ENCODE measurements at regions of chrX and their contacts with region 1.

Region 1: DNA sequence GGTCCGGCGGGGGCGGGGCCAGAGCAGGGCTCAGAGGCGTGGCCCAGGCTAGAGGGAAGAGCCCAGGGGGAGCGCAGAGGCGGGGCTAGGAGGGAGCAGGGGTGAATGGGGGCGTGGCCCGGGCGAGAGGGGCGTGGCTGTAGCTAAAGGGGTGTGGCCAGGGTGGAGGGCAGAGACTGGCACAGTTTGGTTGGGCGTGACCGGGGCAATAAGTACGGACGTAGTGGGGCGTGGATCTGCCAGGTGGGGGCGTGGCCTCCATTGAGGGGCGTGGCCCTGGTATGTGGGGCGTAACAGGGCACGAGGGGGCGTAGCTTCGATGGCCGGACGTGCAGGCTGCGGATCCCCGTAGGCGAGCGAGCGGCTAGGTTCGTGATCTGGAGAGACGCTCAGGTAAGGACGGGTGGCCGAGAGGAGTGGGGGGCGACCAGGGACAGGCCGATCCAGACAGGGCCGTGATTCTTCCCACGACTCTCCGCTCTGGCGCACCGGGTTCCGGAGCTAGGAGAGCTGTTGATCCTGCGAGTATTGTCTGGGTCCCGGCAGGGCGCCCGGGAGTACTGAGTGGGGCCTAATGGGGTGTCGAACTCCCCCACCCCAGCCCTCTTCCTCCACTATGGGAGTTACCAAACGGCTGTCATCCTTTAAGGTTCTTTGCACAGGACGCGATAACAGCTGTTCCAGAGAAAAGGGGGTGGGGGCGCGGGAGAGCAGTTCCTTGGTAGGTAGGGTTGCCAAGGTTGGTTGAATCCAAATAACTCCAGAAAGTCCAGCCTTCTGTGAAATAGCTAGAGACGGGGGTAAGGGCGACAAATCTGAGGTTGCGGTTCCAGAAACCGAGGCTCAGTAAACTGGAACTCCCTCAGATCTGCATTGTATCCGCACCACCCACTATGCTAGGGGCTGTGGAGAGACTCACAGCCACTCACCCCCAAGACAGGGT is at the start of gene CA5B:
- DNase-seq: peak; percentile 95 to 100 (median 97)
- ATAC-seq: peak; percentile 93
- H3K4me3 ChIP-seq: peak within 1 kb of the TSS; percentile 91
- H3K4me3 Mint-ChIP-seq: peak within 1 kb of the TSS; percentile 100
- H3K27ac ChIP-seq: peak within 1 kb of the TSS; percentile 64 to 82
- H3K27ac Mint-ChIP-seq: peak within 1 kb of the TSS; percentile 92
- H3K4me1 ChIP-seq: peaks cover 28% of the 10 kb centered on the region
- H3K4me1 Mint-ChIP-seq: peaks cover 55% of the 10 kb centered on the region
- H3K27me3 ChIP-seq: no peaks in the 10 kb centered on the region
- H3K27me3 Mint-ChIP-seq: no peaks in the 10 kb centered on the region
- CTCF ChIP-seq: no peak
- total RNA-seq, gene CA5B: 60.8 to 64.5 TPM

Region 2: GRCh38 chrX:14872851-14873675 is 865.2 kb before region 1 on chrX and contains the starts of genes FANCB and MOSPD2:
- CTCF ChIA-PET with region 1: no interaction called
- POLR2A ChIA-PET with region 1: no interaction called
- intact Hi-C with region 1: loop called in 1 of 2 experiments (anchors 10 kb)
- DNase-seq: peak; percentile 82 to 97 (median 92)
- ATAC-seq: peak; percentile 89
- H3K4me3 ChIP-seq: peak within 1 kb of the TSS; percentile 85
- H3K4me3 Mint-ChIP-seq: peak within 1 kb of the TSS; percentile 93
- H3K27ac ChIP-seq: peak within 1 kb of the TSS; percentile 71 to 72
- H3K27ac Mint-ChIP-seq: peak within 1 kb of the TSS; percentile 91
- H3K4me1 ChIP-seq: peaks cover 7% of the 10 kb centered on the region
- H3K4me1 Mint-ChIP-seq: peaks cover 8% of the 10 kb centered on the region
- H3K27me3 ChIP-seq: no peaks in the 10 kb centered on the region
- H3K27me3 Mint-ChIP-seq: no peaks in the 10 kb centered on the region
- CTCF ChIP-seq: no peak
- total RNA-seq, gene FANCB: 1.5 to 1.6 TPM
- total RNA-seq, gene MOSPD2: 6.4 to 6.8 TPM

Region 3: GRCh38 chrX:15579778-15580747 is 158.2 kb before region 1 on chrX:
- CTCF ChIA-PET with region 1: no interaction called
- POLR2A ChIA-PET with region 1: no interaction called
- intact Hi-C with region 1: no loop called
- DNase-seq: no peak
- ATAC-seq: no peak
- H3K4me3 ChIP-seq: no peak overlapping the region
- H3K4me3 Mint-ChIP-seq: no peak overlapping the region
- H3K27ac ChIP-seq: no peak overlapping the region
- H3K27ac Mint-ChIP-seq: no peak overlapping the region
- H3K4me1 ChIP-seq: no peaks in the 10 kb centered on the region
- H3K4me1 Mint-ChIP-seq: no peaks in the 10 kb centered on the region
- H3K27me3 ChIP-seq: no peaks in the 10 kb centered on the region
- H3K27me3 Mint-ChIP-seq: no peaks in the 10 kb centered on the region
- CTCF ChIP-seq: no peak

Region 4: GRCh38 chrX:15749642-15750610 is 11.7 kb after region 1 on chrX:
- CTCF ChIA-PET with region 1: interaction called, 25 read pairs
- POLR2A ChIA-PET with region 1: interaction called, 204 read pairs
- intact Hi-C with region 1: loop called in 1 of 2 experiments (anchors 1 kb)
- DNase-seq: peak in 6 of 14 experiments; percentile 12 to 65 (median 60)
- ATAC-seq: peak; percentile 57
- H3K4me3 ChIP-seq: peak overlapping the region; percentile 19
- H3K4me3 Mint-ChIP-seq: peak overlapping the region; percentile 64
- H3K27ac ChIP-seq: peak overlapping the region; percentile 82 to 98
- H3K27ac Mint-ChIP-seq: peak overlapping the region; percentile 91
- H3K4me1 ChIP-seq: peaks cover 60% of the 10 kb centered on the region
- H3K4me1 Mint-ChIP-seq: peaks cover 86% of the 10 kb centered on the region
- H3K27me3 ChIP-seq: no peaks in the 10 kb centered on the region
- H3K27me3 Mint-ChIP-seq: no peaks in the 10 kb centered on the region
- CTCF ChIP-seq: no peak

Region 5: DNA sequence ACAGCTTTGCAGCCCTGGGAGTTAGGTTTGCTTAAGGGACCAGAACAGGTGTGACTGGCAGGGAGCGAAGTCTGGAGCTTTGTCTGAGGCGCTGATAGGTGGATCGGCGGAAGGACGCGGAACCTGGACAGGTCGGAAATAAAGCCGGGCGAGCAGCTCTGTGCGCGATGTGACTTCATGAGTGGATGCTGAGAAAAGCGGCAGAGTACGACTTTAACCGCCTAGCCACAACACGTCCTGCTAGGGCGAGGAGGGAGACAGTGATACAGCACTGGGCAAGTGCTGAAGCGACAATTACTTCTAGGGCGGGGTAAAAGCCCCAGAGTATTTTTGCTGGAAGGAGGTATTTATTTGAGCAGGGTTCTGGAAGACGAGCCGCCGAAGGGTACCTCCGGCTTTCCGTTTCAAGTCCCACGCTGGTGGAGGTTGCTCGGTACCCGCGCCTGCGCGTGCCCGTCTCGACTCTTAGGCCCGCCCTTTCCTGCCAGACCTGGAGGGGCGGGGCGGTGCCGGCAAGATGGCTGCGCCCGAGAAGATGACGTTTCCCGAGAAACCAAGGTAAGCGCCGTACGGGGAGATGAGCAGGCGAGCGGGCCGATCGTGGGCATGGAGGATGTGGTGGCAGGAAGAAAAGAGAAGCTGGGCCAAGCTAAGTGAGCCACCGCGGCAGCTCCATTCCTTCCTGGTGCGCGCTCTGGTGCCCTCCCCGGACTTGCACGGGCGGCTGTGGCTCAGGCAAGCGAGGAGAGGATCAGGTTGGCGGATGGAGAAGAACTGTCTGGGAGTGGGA is 51.9 kb after region 1 on chrX and contains the start of gene ZRSR2:
- CTCF ChIA-PET with region 1: interaction called, 4 read pairs
- POLR2A ChIA-PET with region 1: interaction called, 38 read pairs
- intact Hi-C with region 1: no loop called
- DNase-seq: peak; percentile 72 to 94 (median 86)
- ATAC-seq: peak; percentile 90
- H3K4me3 ChIP-seq: peak within 1 kb of the TSS; percentile 86
- H3K4me3 Mint-ChIP-seq: no peak within 1 kb of the TSS
- H3K27ac ChIP-seq: peak within 1 kb of the TSS; percentile 87 to 92
- H3K27ac Mint-ChIP-seq: no peak within 1 kb of the TSS
- H3K4me1 ChIP-seq: peaks cover 27% of the 10 kb centered on the region
- H3K4me1 Mint-ChIP-seq: peaks cover 13% of the 10 kb centered on the region
- H3K27me3 ChIP-seq: no peaks in the 10 kb centered on the region
- H3K27me3 Mint-ChIP-seq: no peaks in the 10 kb centered on the region
- CTCF ChIP-seq: no peak
- total RNA-seq, gene ZRSR2: 18.4 to 21.1 TPM

Region 6: DNA sequence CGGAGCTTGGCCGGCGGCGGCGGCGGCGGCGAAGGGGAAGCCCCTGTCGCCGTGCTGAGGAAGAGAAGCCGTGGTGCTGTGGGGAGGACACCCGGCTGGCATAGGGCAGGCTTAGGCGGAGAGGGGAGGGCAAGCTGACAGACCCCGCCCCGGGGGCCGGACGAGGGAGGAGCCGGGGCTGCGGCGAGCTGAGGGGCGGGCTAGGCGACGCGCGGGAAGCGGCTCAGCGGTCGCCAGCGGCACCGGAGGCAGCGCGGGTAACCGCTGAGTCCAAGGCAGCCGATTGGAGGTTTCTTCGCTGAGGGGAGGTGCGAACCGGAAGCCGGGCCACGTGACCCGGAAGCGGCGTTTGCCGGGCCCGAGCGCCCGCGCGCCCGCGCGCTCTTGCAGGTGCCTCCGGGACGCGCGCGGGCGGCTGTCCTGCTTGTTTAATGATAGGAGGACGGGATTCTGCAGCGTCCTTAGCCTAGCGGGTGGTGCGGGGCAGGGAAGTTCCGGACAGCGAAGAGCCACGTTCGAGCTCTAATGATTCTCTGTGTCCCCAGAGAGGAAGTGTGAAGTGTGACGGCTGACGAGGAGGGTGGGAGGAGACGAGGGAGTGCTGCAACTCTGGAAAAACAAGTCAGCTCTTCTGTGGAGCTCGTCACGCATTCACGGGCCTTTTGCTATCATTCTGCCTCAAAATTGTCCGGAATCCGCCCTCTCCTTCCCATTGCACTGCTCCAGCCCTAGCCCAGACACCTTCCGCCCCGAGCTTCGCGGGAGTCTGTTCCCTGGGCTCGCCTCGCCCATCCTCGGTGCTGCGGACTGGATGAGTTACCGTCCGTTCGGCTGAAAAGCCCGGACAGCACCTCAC is 116.7 kb after region 1 on chrX and contains the start of gene AP1S2:
- CTCF ChIA-PET with region 1: interaction called, 5 read pairs
- POLR2A ChIA-PET with region 1: interaction called, 44 read pairs
- intact Hi-C with region 1: loop called in 1 of 2 experiments (anchors 2 kb)
- DNase-seq: peak; percentile 84 to 99 (median 94)
- ATAC-seq: peak; percentile 94
- H3K4me3 ChIP-seq: peak within 1 kb of the TSS; percentile 81
- H3K4me3 Mint-ChIP-seq: peak within 1 kb of the TSS; percentile 97
- H3K27ac ChIP-seq: peak within 1 kb of the TSS; percentile 87 to 89
- H3K27ac Mint-ChIP-seq: peak within 1 kb of the TSS; percentile 100
- H3K4me1 ChIP-seq: peaks cover 5% of the 10 kb centered on the region
- H3K4me1 Mint-ChIP-seq: peaks cover 38% of the 10 kb centered on the region
- H3K27me3 ChIP-seq: no peaks in the 10 kb centered on the region
- H3K27me3 Mint-ChIP-seq: no peaks in the 10 kb centered on the region
- CTCF ChIP-seq: no peak
- total RNA-seq, gene AP1S2: 20.0 to 20.8 TPM